ENCODE measurements at regions of chr7 and their contacts with region 1.

Region 1: GRCh38 chr7:32891800-32892520 is 400 bp upstream of the KBTBD2 start:
- DNase-seq: peak; percentile 94 to 99 (median 98)
- ATAC-seq: peak; percentile 65
- H3K4me3 Mint-ChIP-seq: peak overlapping the region; percentile 88 to 97 (median 94)
- H3K27ac Mint-ChIP-seq: peak overlapping the region; percentile 96 to 100 (median 99)
- H3K4me1 Mint-ChIP-seq: peaks cover 21 to 56% (median 45%) of the 10 kb centered on the region in 4 donors
- H3K27me3 Mint-ChIP-seq: peaks cover 0 to 3% (median 0%) of the 10 kb centered on the region in 5 donors

Region 2: GRCh38 chr7:32495298-32496176 is 396.4 kb before region 1 on chr7 and contains the start of gene AVL9:
- POLR2A ChIA-PET with region 1: interaction called, 22 read pairs
- DNase-seq: peak; percentile 95 to 100 (median 99)
- ATAC-seq: peak; percentile 88 to 90
- H3K4me3 Mint-ChIP-seq: peak within 1 kb of the TSS; percentile 91 to 99 (median 94)
- H3K27ac Mint-ChIP-seq: peak within 1 kb of the TSS; percentile 92 to 99 (median 98)
- H3K4me1 Mint-ChIP-seq: peaks cover 8 to 61% (median 39%) of the 10 kb centered on the region in 4 donors
- H3K27me3 Mint-ChIP-seq: no peaks in the 10 kb centered on the region
- polyA plus RNA-seq, gene AVL9: 10.4 to 13.4 (median 12.5) TPM

Region 3: GRCh38 chr7:32846701-32847100 is 45.3 kb before region 1 on chr7:
- POLR2A ChIA-PET with region 1: interaction called, 22 read pairs
- DNase-seq: peak; percentile 81 to 93 (median 90)
- ATAC-seq: peak; percentile 100
- H3K4me3 Mint-ChIP-seq: peak overlapping the region in 6 of 10 donors; percentile 3 to 38 (median 29)
- H3K27ac Mint-ChIP-seq: peak overlapping the region in 3 of 10 donors; percentile 52 to 62 (median 56)
- H3K4me1 Mint-ChIP-seq: peaks cover 4 to 9% (median 7%) of the 10 kb centered on the region in 4 donors
- H3K27me3 Mint-ChIP-seq: peaks cover 19 to 43% (median 28%) of the 10 kb centered on the region in 5 donors

Region 4: GRCh38 chr7:32879460-32879859 is 12.5 kb before region 1 on chr7:
- POLR2A ChIA-PET with region 1: interaction called, 15 read pairs
- DNase-seq: no peak
- ATAC-seq: no peak
- H3K4me3 Mint-ChIP-seq: peak overlapping the region in 3 of 10 donors; percentile 6 to 31 (median 19)
- H3K27ac Mint-ChIP-seq: peak overlapping the region in 5 of 10 donors; percentile 10 to 58 (median 37)
- H3K4me1 Mint-ChIP-seq: peaks cover 19 to 71% (median 64%) of the 10 kb centered on the region in 4 donors
- H3K27me3 Mint-ChIP-seq: no peaks in the 10 kb centered on the region

Region 5: GRCh38 chr7:32905175-32905662 is 13.3 kb after region 1 on chr7:
- POLR2A ChIA-PET with region 1: interaction called, 50 read pairs
- DNase-seq: peak; percentile 30 to 86 (median 80)
- ATAC-seq: peak; percentile 88 to 94
- H3K4me3 Mint-ChIP-seq: peak overlapping the region; percentile 77 to 91 (median 82)
- H3K27ac Mint-ChIP-seq: peak overlapping the region; percentile 84 to 98 (median 94)
- H3K4me1 Mint-ChIP-seq: peaks cover 0 to 19% (median 15%) of the 10 kb centered on the region in 4 donors
- H3K27me3 Mint-ChIP-seq: peaks cover 0 to 3% (median 0%) of the 10 kb centered on the region in 5 donors

Region 6: GRCh38 chr7:32928785-32929298 is 36.9 kb after region 1 on chr7:
- POLR2A ChIA-PET with region 1: no interaction called
- DNase-seq: no peak
- ATAC-seq: no peak
- H3K4me3 Mint-ChIP-seq: no peak overlapping the region
- H3K27ac Mint-ChIP-seq: no peak overlapping the region
- H3K4me1 Mint-ChIP-seq: peaks cover 0 to 14% (median 0%) of the 10 kb centered on the region in 4 donors
- H3K27me3 Mint-ChIP-seq: no peaks in the 10 kb centered on the region

Region 7: GRCh38 chr7:32942786-32943653 is 51.1 kb after region 1 on chr7:
- POLR2A ChIA-PET with region 1: interaction called, 28 read pairs
- DNase-seq: peak; percentile 29 to 74 (median 62)
- ATAC-seq: peak; percentile 87 to 90
- H3K4me3 Mint-ChIP-seq: peak overlapping the region; percentile 61 to 92 (median 79)
- H3K27ac Mint-ChIP-seq: peak overlapping the region in 1 of 10 donors; percentile 71
- H3K4me1 Mint-ChIP-seq: peaks cover 4 to 20% (median 10%) of the 10 kb centered on the region in 4 donors
- H3K27me3 Mint-ChIP-seq: peaks cover 6 to 14% (median 8%) of the 10 kb centered on the region in 5 donors

Region 8: DNA sequence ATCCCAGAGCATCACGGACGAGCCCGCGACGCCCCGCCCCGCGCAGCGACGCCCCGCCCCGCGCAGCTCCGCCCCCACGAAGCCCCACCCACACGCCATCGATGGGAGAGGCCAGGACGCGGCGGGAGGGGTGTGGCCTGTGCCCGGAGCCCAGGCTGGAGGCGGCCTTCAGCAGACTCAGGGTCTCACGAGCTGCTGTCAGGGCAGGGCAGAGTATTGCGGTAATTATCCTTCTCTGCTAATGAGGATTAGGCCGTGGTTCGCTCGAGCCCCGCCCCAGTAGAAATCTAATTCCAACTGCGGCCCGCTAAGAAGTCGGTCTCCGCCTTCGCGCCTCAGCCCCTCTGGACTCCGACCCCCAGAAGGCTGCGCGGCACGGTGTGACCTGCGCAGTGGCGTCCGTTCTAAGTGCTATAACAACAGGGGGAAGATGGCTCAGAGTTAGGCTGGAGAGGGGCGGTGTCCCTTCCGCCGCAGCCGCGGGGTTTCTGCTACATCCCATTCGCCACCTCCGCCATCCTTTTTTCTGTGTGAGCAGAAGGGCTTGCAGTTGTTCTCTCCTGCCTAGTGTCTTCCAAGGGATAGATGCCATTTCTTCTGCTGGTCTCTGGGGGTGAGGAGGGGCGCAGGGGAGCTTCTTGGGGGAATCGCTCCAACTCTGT is 171.0 kb after region 1 on chr7:
- POLR2A ChIA-PET with region 1: interaction called, 27 read pairs
- DNase-seq: peak; percentile 88 to 98 (median 92)
- ATAC-seq: peak; percentile 91
- H3K4me3 Mint-ChIP-seq: peak overlapping the region; percentile 89 to 97 (median 96)
- H3K27ac Mint-ChIP-seq: peak overlapping the region; percentile 92 to 98 (median 96)
- H3K4me1 Mint-ChIP-seq: peaks cover 14 to 46% (median 40%) of the 10 kb centered on the region in 4 donors
- H3K27me3 Mint-ChIP-seq: no peaks in the 10 kb centered on the region